K562 (cell line): ENCODE measurements at regions of chr7 and their contacts with region 1.

Region 1: GRCh38 chr7:86814661-86815379 is 171.1 kb downstream of the GRM3 start:
- DNase-seq: peak; percentile 27 to 38 (median 34)
- ATAC-seq: peak; percentile 79
- H3K4me3 ChIP-seq: no peak overlapping the region
- H3K27ac ChIP-seq: no peak overlapping the region
- H3K4me1 ChIP-seq: no peaks in the 10 kb centered on the region
- H3K27me3 ChIP-seq: no peaks in the 10 kb centered on the region
- CTCF ChIP-seq: peak; percentile 56 to 60 (median 58); a peak in 5 of 6 replicates
- EP300 ChIP-seq: no peak
- POLR2A ChIP-seq: no peak
- RAD21 ChIP-seq: peak; percentile 30 to 68; a peak in 3 of 4 replicates

Region 2: GRCh38 chr7:85890244-85890811 is 924.5 kb before region 1 on chr7:
- CTCF ChIA-PET with region 1: interaction called, 4 read pairs
- POLR2A ChIA-PET with region 1: no interaction called
- in situ Hi-C with region 1: no loop called
- intact Hi-C with region 1: loop called (anchors 1 kb)
- DNase-seq: peak in 2 of 4 experiments; percentile 14 to 16
- ATAC-seq: no peak
- H3K4me3 ChIP-seq: no peak overlapping the region
- H3K27ac ChIP-seq: no peak overlapping the region
- H3K4me1 ChIP-seq: no peaks in the 10 kb centered on the region
- H3K27me3 ChIP-seq: no peaks in the 10 kb centered on the region
- CTCF ChIP-seq: peak in 2 of 3 experiments; percentile 11 to 55; a peak in 3 of 6 replicates
- EP300 ChIP-seq: no peak
- POLR2A ChIP-seq: no peak
- RAD21 ChIP-seq: peak; percentile 61 to 75

Region 3: GRCh38 chr7:86598311-86598710 is 216.5 kb before region 1 on chr7:
- CTCF ChIA-PET with region 1: no interaction called
- POLR2A ChIA-PET with region 1: no interaction called
- in situ Hi-C with region 1: no loop called
- intact Hi-C with region 1: loop called (anchors 10 kb)
- DNase-seq: peak in 2 of 4 experiments; percentile 16 to 36
- ATAC-seq: peak; percentile 74
- H3K4me3 ChIP-seq: no peak overlapping the region
- H3K27ac ChIP-seq: no peak overlapping the region
- H3K4me1 ChIP-seq: no peaks in the 10 kb centered on the region
- H3K27me3 ChIP-seq: no peaks in the 10 kb centered on the region
- CTCF ChIP-seq: peak; percentile 21 to 45 (median 25); a peak in 3 of 6 replicates
- EP300 ChIP-seq: no peak
- POLR2A ChIP-seq: no peak
- RAD21 ChIP-seq: peak; percentile 28 to 50; a peak in 3 of 4 replicates

Region 4: GRCh38 chr7:87003872-87004798 is 189.3 kb after region 1 on chr7:
- CTCF ChIA-PET with region 1: no interaction called
- POLR2A ChIA-PET with region 1: no interaction called
- in situ Hi-C with region 1: no loop called
- intact Hi-C with region 1: no loop called
- DNase-seq: peak in 3 of 4 experiments; percentile 41 to 86 (median 65)
- ATAC-seq: peak; percentile 91
- H3K4me3 ChIP-seq: peak overlapping the region; percentile 10; the same call in 1 of the 2 replicates
- H3K27ac ChIP-seq: peak overlapping the region; percentile 66; the same call in 2 of the 3 replicates
- H3K4me1 ChIP-seq: peaks cover 0 to 25% of the 10 kb centered on the region in 2 experiments; a peak in 3 of 5 replicates
- H3K27me3 ChIP-seq: no peaks in the 10 kb centered on the region
- CTCF ChIP-seq: no peak
- EP300 ChIP-seq: peak; percentile 35; the same call in 1 of the 2 replicates
- POLR2A ChIP-seq: no peak
- RAD21 ChIP-seq: no peak